Activated CD4-positive, alpha-beta memory T cell treated with anti-CD3 and anti-CD28 coated beads, Interleukin-2, amount 10 ng/mL, durations not matched to agents 7 days and 5 days (primary cell): ENCODE measurements at regions of chr14 and their contacts with region 1.

Region 1: DNA sequence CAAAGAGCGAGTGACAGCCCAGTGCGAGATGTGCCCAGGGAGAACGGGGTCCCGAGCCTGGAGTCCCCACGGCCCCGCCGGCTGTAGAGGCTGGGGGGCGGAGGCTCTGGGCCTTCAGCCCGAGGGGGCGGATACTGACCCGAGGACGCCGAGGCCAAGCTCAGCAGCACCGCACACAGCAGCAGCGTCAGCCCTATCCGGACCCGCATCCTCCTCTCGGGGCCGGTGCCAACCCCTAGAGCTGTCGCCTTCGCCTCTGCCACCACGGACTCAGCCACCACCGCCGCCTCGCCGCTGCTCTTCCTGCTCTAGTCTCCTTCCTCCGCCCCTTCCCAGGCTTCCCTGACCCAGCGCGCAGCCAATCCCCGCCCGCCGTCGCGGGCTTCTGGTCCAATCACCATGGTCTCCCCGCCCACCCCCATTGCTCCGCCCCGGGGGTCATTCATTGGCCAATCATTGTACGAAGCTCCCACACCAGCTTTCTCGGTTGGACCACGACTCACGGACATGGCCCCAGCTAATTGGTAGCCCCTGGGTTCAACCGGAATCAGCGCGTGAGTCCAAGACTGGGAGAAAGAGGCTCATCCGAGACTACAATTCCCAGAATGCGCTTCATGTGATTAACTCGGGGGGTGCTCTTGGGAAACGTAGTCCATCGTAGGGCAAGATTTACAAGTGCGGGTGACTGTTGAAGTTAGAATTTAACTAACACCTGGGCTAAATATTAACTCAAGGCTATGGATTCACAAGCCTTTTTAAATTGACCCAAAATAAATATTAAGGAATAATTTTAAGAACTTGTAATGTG is at the start of gene SEL1L:
- DNase-seq: peak; percentile 100
- H3K4me3 Mint-ChIP-seq: peak within 1 kb of the TSS; percentile 98
- H3K27ac Mint-ChIP-seq: peak within 1 kb of the TSS; percentile 79
- H3K4me1 Mint-ChIP-seq: peaks cover 51% of the 10 kb centered on the region
- H3K27me3 Mint-ChIP-seq: no peaks in the 10 kb centered on the region
- total RNA-seq, gene SEL1L: 65.9 to 67.6 TPM

Region 2: DNA sequence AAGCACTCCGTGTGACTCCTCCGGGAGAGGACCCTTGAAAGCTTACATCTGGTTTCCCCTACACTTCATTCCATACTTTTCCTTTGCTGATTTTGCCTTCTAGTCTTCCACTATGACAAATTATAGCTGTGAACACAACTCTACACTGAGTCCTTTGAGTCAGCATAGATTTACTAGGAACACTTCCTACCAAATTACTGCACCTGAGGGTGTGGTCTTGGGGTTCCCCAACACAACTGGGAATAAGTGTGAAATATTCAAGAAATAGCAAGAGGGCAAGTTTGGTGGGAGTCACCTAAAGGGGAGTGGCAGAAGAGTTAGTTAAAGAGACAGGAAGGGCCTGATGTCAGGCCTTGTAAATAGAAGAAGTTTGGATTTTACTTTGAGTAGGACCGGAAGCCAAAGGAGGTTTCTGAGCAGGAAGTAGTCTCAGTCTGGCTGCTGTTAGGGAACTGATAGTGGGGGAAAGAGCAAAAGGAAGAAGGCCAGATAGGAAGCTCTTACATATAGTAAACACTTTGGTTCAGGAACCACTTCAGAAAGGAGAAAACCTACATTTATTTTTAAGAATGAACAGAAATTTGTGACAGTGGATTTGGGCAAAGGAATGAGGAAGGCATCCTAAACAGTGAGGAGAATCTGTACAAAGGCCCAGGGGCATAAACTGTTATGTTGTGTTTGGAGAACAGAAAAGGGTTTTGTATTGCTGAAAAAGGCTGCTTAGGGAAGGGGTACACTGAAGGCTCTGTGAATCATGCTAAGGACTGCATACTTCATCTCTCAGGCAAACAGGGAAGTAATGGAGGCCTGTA is 14.3 kb before region 1 on chr14:
- CTCF ChIA-PET with region 1: no interaction called
- POLR2A ChIA-PET with region 1: interaction called, 19 read pairs
- DNase-seq: peak; percentile 20
- H3K4me3 Mint-ChIP-seq: peak overlapping the region; percentile 9
- H3K27ac Mint-ChIP-seq: peak overlapping the region; percentile 86
- H3K4me1 Mint-ChIP-seq: peaks cover 32% of the 10 kb centered on the region
- H3K27me3 Mint-ChIP-seq: no peaks in the 10 kb centered on the region

Region 3: DNA sequence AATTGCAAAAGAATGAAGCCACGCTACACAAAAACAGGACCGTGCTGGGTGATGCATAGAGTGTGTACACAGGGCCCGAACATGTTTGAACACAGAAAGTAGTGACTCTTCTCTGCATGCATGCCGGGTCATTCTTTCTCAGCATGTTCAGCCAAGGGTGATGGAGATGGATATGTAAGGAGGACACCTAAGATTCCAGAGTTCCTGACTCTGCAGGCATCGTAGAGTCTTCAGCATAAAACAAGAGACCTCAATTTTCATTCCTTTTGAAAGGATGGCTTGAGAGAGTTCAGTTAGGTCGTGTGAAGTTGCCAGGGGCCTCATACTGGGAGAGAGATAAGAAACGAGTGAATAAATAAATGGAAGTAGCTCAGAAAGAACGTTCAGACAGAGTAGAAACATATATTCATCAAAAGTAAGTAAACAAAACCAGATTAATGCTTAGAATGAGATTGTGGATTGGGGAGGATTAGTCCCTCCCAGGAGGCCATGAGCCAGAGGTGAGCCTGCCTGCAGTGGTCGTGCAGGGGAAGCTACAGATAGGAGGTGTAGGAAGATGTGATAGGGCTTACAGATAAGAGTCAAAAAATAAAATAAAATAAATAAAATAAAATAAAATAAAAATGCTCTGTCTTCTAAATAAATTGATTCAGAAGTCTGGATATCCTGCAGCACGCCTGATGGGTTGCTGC is 27.5 kb after region 1 on chr14:
- CTCF ChIA-PET with region 1: no interaction called
- POLR2A ChIA-PET with region 1: no interaction called
- DNase-seq: no peak
- H3K4me3 Mint-ChIP-seq: no peak overlapping the region
- H3K27ac Mint-ChIP-seq: no peak overlapping the region
- H3K4me1 Mint-ChIP-seq: no peaks in the 10 kb centered on the region
- H3K27me3 Mint-ChIP-seq: peaks cover 9% of the 10 kb centered on the region

Region 4: GRCh38 chr14:81710234-81710845 is 176.6 kb after region 1 on chr14:
- CTCF ChIA-PET with region 1: no interaction called
- POLR2A ChIA-PET with region 1: no interaction called
- DNase-seq: no peak
- H3K4me3 Mint-ChIP-seq: no peak overlapping the region
- H3K27ac Mint-ChIP-seq: no peak overlapping the region
- H3K4me1 Mint-ChIP-seq: no peaks in the 10 kb centered on the region
- H3K27me3 Mint-ChIP-seq: no peaks in the 10 kb centered on the region